Activated T-helper 1 cell treated with anti-CD3 and anti-CD28 coated beads, Interleukin-12 subunit alpha, Interleukin-12 subunit beta, Interleukin-2, Interleukin-4 antibody, amounts not matched to agents 30 ng/mL and 10 ng/mL and 1 ng/mL, durations not matched to agents 14 hours and 24 hours and 36 hours (primary cell): ENCODE measurements at regions of chr10 and their contacts with region 1.

Region 1: GRCh38 chr10:101353692-101354327 is at the start of gene BTRC:
- DNase-seq: peak; percentile 96
- H3K4me3 Mint-ChIP-seq: peak within 1 kb of the TSS; percentile 96
- H3K27ac Mint-ChIP-seq: peak within 1 kb of the TSS; percentile 98
- H3K4me1 Mint-ChIP-seq: peaks cover 32% of the 10 kb centered on the region
- H3K27me3 Mint-ChIP-seq: peaks cover 17% of the 10 kb centered on the region
- total RNA-seq, gene BTRC: 19.7 and 22.2 TPM in 2 replicates

Region 2: GRCh38 chr10:100912605-100913469 is 441.0 kb before region 1 on chr10 and contains the start of gene SLF2:
- intact Hi-C with region 1: loop called (anchors 2 kb)
- DNase-seq: peak; percentile 94
- H3K4me3 Mint-ChIP-seq: peak within 1 kb of the TSS; percentile 97
- H3K27ac Mint-ChIP-seq: peak within 1 kb of the TSS; percentile 95
- H3K4me1 Mint-ChIP-seq: peaks cover 48% of the 10 kb centered on the region
- H3K27me3 Mint-ChIP-seq: no peaks in the 10 kb centered on the region
- total RNA-seq, gene SLF2: 33.4 and 36.1 TPM in 2 replicates

Region 3: GRCh38 chr10:101060036-101060950 is 293.5 kb before region 1 on chr10:
- intact Hi-C with region 1: loop called (anchors 1 kb)
- DNase-seq: peak; percentile 84
- H3K4me3 Mint-ChIP-seq: peak overlapping the region; percentile 92
- H3K27ac Mint-ChIP-seq: peak overlapping the region; percentile 91
- H3K4me1 Mint-ChIP-seq: peaks cover 33% of the 10 kb centered on the region
- H3K27me3 Mint-ChIP-seq: peaks cover 22% of the 10 kb centered on the region

Region 4: GRCh38 chr10:101397140-101397539 is 43.3 kb after region 1 on chr10:
- intact Hi-C with region 1: loop called (anchors 1 kb)
- DNase-seq: peak; percentile 14
- H3K4me3 Mint-ChIP-seq: no peak overlapping the region
- H3K27ac Mint-ChIP-seq: no peak overlapping the region
- H3K4me1 Mint-ChIP-seq: peaks cover 8% of the 10 kb centered on the region
- H3K27me3 Mint-ChIP-seq: no peaks in the 10 kb centered on the region

Region 5: DNA sequence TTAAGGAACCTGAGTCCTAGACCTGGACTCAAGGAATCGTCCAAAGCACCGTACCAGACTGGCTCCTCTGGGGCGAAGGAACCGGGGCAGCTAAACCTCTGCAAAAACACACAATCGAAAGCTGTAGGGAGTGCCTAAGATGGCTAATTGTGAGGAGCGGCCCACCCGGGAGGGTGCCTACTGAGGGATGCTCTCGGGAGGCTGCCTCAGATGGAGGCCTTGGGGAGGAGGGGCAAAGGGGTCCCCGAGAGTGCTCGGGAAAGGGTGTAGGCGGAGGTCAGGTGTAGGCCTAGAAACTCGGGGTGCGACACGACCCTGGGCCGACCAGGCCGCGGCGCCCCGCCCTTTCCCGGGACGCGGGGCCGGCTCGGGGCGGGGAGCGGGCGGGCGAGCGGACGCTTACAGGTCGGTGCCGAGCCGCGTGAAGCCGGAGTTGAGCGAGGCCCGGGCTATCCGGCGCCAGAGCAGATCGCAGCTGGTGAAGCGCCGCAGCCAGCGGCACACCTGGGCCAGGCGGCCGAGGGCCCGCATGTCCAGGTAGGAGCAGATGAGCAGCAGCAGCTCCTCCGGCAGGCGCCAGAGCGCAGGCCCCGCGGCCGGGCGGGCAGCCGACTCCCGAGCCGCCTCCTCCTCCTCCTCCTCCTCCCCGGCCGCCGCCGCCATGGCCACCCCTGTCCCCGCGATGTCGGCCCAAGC is 340.3 kb after region 1 on chr10:
- intact Hi-C with region 1: loop called (anchors 10 kb)
- DNase-seq: peak; percentile 70
- H3K4me3 Mint-ChIP-seq: peak overlapping the region; percentile 93
- H3K27ac Mint-ChIP-seq: peak overlapping the region; percentile 98
- H3K4me1 Mint-ChIP-seq: peaks cover 41% of the 10 kb centered on the region
- H3K27me3 Mint-ChIP-seq: no peaks in the 10 kb centered on the region

Region 6: DNA sequence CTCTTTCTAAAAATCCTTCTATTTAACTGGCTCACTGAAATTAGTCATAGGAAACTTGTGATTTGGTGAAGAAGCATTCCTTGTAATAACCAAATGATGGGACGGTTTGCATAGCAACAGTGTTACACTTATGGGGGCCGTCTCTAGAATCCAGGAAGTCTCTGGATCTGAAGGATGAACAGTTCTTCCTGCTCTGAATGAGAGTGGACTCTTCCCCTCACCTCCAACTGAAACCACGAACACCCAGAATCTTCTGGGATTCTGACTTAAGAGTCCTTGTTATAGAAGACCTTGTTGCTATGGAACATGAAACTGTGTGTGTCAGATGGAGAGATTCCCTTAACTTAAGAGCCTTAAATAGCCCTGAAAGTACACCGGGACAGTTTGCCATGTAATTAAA is 821.6 kb after region 1 on chr10:
- intact Hi-C with region 1: no loop called
- DNase-seq: no peak
- H3K4me3 Mint-ChIP-seq: no peak overlapping the region
- H3K27ac Mint-ChIP-seq: no peak overlapping the region
- H3K4me1 Mint-ChIP-seq: no peaks in the 10 kb centered on the region
- H3K27me3 Mint-ChIP-seq: peaks cover 8% of the 10 kb centered on the region

Region 7: DNA sequence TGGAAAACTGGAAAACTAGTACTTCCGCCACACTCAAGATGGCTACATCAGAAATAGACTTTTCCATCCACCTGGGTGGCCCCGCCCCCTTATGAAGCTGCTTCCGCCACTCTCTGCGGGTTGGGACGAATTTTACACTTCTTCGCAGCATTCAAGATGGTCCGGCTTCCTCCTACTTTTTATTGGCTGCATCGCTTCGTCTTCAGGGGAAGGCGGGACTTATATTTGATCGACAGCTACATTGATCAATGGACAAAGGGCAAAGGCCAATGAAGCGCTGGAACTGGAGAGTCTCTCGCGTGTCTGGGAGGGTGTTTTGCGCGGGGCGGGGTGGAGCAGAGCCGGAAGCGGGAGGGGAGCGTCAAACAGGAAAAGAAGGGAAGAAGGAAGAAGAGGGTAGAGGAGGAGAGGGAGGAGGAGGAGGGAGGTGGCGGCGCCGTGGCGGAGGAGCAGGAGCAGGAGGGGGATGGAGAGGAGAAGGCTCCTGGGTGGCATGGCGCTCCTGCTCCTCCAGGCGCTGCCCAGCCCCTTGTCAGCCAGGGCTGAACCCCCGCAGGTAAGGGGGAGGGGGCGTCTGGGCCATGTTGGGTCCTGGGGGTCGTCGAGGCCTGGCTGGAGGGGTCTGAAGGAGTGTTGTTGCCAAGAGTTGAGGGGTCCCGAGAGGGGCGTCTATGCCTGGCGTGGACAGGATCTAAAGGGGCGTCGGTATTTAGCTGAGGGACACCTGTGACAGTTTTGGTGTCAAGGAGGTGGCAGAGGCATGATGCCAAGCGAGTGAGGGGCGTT is 1390.0 kb after region 1 on chr10 and contains the start of gene WBP1L:
- intact Hi-C with region 1: loop called (anchors 5 kb)
- DNase-seq: peak; percentile 94
- H3K4me3 Mint-ChIP-seq: peak within 1 kb of the TSS; percentile 92
- H3K27ac Mint-ChIP-seq: peak within 1 kb of the TSS; percentile 93
- H3K4me1 Mint-ChIP-seq: peaks cover 46% of the 10 kb centered on the region
- H3K27me3 Mint-ChIP-seq: peaks cover 1% of the 10 kb centered on the region
- total RNA-seq, gene WBP1L: 19.4 and 20.0 TPM in 2 replicates